CD4-positive, alpha-beta T cell (primary cell): ENCODE measurements at regions of chr3 and their contacts with region 1.

Region 1: DNA sequence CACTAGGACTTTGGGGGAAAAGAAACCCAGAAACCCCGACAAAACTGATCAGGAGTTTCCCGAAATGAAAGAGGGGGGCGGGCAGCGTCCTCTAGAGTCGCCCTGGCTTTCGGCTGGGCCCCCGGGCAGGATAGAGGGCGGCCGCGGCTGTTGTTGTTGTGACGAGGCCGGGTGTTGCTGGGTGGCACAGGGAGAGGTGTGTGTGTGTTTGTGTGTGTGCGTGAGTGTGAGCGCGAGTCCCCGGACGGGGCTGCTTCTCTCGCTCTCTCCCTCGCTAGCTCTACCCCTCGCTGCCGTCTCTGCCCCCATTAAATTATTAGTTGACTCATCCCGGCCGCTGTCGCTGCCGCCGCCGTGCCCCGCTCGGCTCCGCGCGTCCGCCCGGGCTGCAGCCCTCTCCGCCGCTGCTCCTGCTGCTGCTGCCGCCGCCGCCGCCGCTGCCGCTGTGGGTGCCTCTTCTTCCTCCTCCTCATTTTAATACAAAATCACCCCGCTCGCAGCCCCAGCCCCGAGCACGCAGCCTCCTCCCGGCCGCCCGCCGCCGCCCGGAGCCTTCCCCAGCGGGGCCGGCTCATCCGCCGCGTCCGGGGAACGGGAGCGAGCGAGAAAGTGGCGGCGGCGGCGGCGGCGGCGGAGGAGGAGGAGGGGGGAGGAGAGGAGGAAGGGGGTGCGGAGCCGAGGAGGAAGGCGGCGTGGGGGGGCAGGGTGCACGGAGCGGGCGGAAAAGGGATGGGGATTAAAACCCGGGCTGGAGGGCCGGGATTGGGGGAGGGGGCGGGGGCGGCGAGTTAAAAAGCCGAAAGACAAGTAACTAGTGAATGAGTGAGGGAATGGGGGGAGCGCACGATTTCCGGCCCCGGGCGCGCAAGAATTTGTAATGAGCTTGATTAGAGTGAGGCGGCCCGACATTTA is at the start of gene SATB1:
- DNase-seq: peak; percentile 50 to 82 (median 67)
- ATAC-seq: peak; percentile 33
- H3K4me3 ChIP-seq: peak within 1 kb of the TSS; percentile 90
- H3K4me3 Mint-ChIP-seq: peak within 1 kb of the TSS; percentile 98
- H3K27ac ChIP-seq: peak within 1 kb of the TSS; percentile 74 to 94
- H3K27ac Mint-ChIP-seq: peak within 1 kb of the TSS; percentile 96
- H3K4me1 ChIP-seq: peaks cover 29% of the 10 kb centered on the region
- H3K4me1 Mint-ChIP-seq: peaks cover 81% of the 10 kb centered on the region
- H3K27me3 ChIP-seq: no peaks in the 10 kb centered on the region
- H3K27me3 Mint-ChIP-seq: no peaks in the 10 kb centered on the region
- CTCF ChIP-seq: no peak
- total RNA-seq, gene SATB1: 390 to 393 TPM

Region 2: GRCh38 chr3:18411541-18411940 is 13.4 kb before region 1 on chr3:
- CTCF ChIA-PET with region 1: interaction called, 4 read pairs
- POLR2A ChIA-PET with region 1: interaction called, 23 read pairs
- intact Hi-C with region 1: loop called in 1 of 2 experiments (anchors 1 kb)
- DNase-seq: peak in 3 of 14 experiments; percentile 43 to 62 (median 46)
- ATAC-seq: peak; percentile 72
- H3K4me3 ChIP-seq: no peak overlapping the region
- H3K4me3 Mint-ChIP-seq: peak overlapping the region; percentile 79
- H3K27ac ChIP-seq: peak overlapping the region in 1 of 2 donors; percentile 53
- H3K27ac Mint-ChIP-seq: peak overlapping the region; percentile 82
- H3K4me1 ChIP-seq: peaks cover 17% of the 10 kb centered on the region
- H3K4me1 Mint-ChIP-seq: peaks cover 89% of the 10 kb centered on the region
- H3K27me3 ChIP-seq: no peaks in the 10 kb centered on the region
- H3K27me3 Mint-ChIP-seq: no peaks in the 10 kb centered on the region
- CTCF ChIP-seq: no peak

Region 3: DNA sequence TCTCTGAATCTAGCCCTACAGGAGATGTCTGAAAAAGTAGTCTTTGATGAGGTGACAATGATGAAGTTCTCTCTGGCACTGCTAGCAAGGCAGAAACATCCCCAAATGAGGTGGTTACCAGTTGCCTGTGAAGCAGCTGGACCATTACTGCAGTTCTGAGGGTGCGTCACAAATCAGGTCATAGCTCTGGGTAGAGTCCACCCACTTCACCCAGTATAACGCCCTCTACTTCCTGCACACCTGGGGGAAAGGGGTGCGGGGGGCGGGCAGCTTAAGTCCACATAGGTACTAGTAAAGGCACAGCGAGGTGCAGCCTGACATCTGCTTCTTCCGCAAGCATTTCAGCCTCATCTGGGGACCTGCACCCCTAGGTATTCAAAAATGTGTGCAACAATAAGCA is 13.6 kb after region 1 on chr3:
- CTCF ChIA-PET with region 1: interaction called, 10 read pairs
- POLR2A ChIA-PET with region 1: interaction called, 152 read pairs
- intact Hi-C with region 1: loop called in 1 of 2 experiments (anchors 1 kb)
- DNase-seq: peak in 13 of 14 experiments; percentile 37 to 90 (median 62)
- ATAC-seq: peak; percentile 89
- H3K4me3 ChIP-seq: peak overlapping the region; percentile 80
- H3K4me3 Mint-ChIP-seq: peak overlapping the region; percentile 86
- H3K27ac ChIP-seq: peak overlapping the region; percentile 67 to 76
- H3K27ac Mint-ChIP-seq: peak overlapping the region; percentile 88
- H3K4me1 ChIP-seq: peaks cover 13% of the 10 kb centered on the region
- H3K4me1 Mint-ChIP-seq: peaks cover 72% of the 10 kb centered on the region
- H3K27me3 ChIP-seq: no peaks in the 10 kb centered on the region
- H3K27me3 Mint-ChIP-seq: no peaks in the 10 kb centered on the region
- CTCF ChIP-seq: no peak

Region 4: DNA sequence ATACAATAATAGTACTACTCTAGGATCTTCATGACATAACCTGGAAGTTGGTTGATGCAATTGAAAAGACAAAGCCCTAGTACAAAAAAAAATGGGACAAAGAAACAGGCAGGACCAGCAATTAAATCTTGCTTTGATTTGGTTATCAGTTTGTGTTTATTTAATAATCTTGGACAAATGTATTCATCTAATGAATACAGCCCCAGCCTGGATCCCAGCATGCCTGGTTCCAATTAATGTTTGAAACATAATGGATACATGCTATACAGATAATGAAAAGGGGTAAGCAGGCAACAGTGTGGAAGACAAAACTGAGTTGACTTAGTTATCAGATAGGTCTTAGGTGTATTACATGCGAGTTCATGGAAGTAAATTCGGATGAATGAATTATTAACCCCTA is 29.8 kb after region 1 on chr3:
- CTCF ChIA-PET with region 1: no interaction called
- POLR2A ChIA-PET with region 1: no interaction called
- intact Hi-C with region 1: no loop called
- DNase-seq: no peak
- ATAC-seq: no peak
- H3K4me3 ChIP-seq: no peak overlapping the region
- H3K4me3 Mint-ChIP-seq: no peak overlapping the region
- H3K27ac ChIP-seq: no peak overlapping the region
- H3K27ac Mint-ChIP-seq: no peak overlapping the region
- H3K4me1 ChIP-seq: peaks cover 3% of the 10 kb centered on the region
- H3K4me1 Mint-ChIP-seq: peaks cover 79% of the 10 kb centered on the region
- H3K27me3 ChIP-seq: no peaks in the 10 kb centered on the region
- H3K27me3 Mint-ChIP-seq: no peaks in the 10 kb centered on the region
- CTCF ChIP-seq: no peak

Region 5: GRCh38 chr3:18758047-18758704 is 333.2 kb after region 1 on chr3:
- CTCF ChIA-PET with region 1: interaction called, 7 read pairs
- POLR2A ChIA-PET with region 1: interaction called, 9 read pairs
- intact Hi-C with region 1: loop called in 1 of 2 experiments (anchors 5 kb)
- DNase-seq: peak in 7 of 14 experiments; percentile 3 to 90 (median 47)
- ATAC-seq: peak; percentile 97
- H3K4me3 ChIP-seq: no peak overlapping the region
- H3K4me3 Mint-ChIP-seq: peak overlapping the region; percentile 5
- H3K27ac ChIP-seq: no peak overlapping the region
- H3K27ac Mint-ChIP-seq: peak overlapping the region; percentile 21
- H3K4me1 ChIP-seq: no peaks in the 10 kb centered on the region
- H3K4me1 Mint-ChIP-seq: peaks cover 56% of the 10 kb centered on the region
- H3K27me3 ChIP-seq: no peaks in the 10 kb centered on the region
- H3K27me3 Mint-ChIP-seq: no peaks in the 10 kb centered on the region
- CTCF ChIP-seq: peak; percentile 83